Activated naive CD4-positive, alpha-beta T cell treated with anti-CD3 and anti-CD28 coated beads for 36 hours (primary cell): ENCODE measurements at regions of chr13 and their contacts with region 1.

Region 1: DNA sequence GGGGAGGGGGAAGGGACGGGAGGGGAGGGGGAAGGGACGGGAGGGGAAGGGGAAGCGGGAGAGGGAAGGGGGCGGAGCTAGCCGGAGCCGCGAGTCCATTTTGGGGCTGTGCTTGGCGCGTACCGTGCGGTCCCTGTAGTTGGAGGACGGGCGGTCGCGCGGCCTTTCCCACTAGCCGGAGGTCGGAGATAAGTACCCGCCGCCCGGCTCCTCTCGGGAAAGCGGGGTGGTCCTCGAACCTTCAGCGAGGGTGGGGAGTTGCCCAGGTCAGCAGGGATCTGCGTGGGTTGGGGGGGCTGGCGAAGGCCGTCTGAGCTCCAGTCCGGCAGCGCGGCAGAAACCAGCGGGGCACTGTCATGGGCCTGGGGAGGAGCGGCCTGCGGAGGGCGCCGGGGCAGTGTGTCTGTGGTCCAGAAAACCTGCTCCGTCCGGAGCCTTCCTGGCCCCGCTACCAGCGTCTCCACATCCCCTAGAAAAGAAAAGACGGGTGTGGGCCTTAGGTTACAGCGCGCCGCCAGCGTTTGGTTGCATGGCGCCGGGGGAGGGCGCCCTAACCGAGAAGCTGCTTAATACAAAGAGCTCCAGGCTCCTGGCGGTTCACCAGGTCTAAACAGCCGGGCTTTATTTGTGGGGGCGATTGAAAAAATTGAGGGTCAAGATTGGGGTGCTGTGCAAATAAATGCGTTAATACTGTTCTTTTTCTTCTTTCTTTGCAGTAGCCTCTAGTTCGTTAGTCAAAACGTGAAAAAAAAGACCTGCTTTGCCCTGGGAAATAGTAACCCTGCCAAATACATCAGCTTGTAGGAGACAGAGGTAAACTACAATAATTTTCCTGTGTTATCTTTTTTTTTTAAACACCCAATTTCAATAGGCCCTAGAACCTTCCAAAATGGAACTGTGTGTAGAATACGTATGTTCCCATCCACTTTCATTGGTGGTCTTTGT is at the start of gene TRIM13:
- DNase-seq: peak; percentile 90
- H3K4me3 Mint-ChIP-seq: peak within 1 kb of the TSS; percentile 79
- H3K27ac Mint-ChIP-seq: peak within 1 kb of the TSS; percentile 85
- H3K4me1 Mint-ChIP-seq: peaks cover 33% of the 10 kb centered on the region
- H3K27me3 Mint-ChIP-seq: no peaks in the 10 kb centered on the region
- total RNA-seq, gene TRIM13: 15.5 to 15.8 TPM

Region 2: DNA sequence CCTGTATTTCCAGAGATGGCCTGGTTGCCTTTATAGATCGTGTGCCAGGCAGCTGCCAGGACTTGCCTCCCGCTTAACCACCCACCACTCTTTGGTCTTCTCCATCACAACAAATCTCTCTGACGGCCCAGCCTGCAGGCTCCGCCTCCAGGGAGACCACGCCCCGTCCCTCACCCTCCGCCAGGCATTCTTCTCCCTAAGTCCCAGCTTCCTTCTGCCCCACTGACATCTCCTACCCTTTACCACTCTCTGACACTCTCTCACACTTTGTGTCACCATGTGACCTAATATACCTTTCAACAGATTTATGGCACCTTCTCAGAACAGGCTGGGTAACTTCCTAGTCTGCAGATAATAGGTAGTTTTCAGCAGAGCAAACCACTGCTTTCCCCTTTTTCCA is 648.5 kb before region 1 on chr13:
- CTCF ChIA-PET with region 1: no interaction called
- intact Hi-C with region 1: no loop called
- DNase-seq: no peak
- H3K4me3 Mint-ChIP-seq: no peak overlapping the region
- H3K27ac Mint-ChIP-seq: no peak overlapping the region
- H3K4me1 Mint-ChIP-seq: peaks cover 3% of the 10 kb centered on the region
- H3K27me3 Mint-ChIP-seq: no peaks in the 10 kb centered on the region

Region 3: GRCh38 chr13:49936085-49936940 is 60.9 kb before region 1 on chr13 and contains the start of gene SPRYD7:
- CTCF ChIA-PET with region 1: interaction called, 3 read pairs
- intact Hi-C with region 1: loop called (anchors 1 kb)
- DNase-seq: peak; percentile 96
- H3K4me3 Mint-ChIP-seq: peak within 1 kb of the TSS; percentile 90
- H3K27ac Mint-ChIP-seq: peak within 1 kb of the TSS; percentile 70
- H3K4me1 Mint-ChIP-seq: peaks cover 7% of the 10 kb centered on the region
- H3K27me3 Mint-ChIP-seq: peaks cover 2% of the 10 kb centered on the region
- total RNA-seq, gene SPRYD7: 2.5 to 2.6 TPM

Region 4: DNA sequence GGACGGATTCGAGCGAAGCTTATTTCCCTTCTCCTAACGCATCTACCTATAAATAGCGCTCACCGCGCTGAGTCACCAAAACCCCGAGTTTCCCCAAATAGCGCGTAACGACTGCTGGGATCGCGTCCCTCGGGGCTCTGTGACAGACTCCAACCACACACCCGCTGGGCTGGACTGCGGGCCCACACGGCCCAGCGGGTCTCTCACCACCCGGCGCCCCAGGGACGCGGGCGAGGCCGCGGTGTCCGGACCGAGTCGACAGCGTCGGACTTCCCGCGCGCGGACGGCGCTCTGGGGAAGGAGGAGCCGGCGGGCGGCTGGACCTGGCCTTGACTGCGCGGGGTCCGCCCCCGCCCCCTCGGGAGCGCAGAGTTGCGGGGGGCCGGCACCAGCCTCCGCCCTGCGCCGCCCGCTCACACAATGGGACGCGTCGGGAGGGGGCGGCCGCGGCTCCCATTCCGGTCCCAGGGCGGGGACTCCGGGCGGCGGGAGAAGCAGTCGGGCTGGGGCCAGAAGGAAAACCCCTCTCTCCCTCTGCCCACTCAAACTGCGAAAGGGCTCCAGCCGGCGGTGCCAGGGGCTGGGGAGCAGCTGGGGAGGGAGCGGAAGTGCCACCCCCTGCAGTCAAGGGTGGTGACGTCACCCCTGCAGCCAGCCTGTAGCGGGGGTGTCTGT is 126.8 kb after region 1 on chr13:
- CTCF ChIA-PET with region 1: no interaction called
- intact Hi-C with region 1: loop called (anchors 1 kb)
- DNase-seq: peak; percentile 89
- H3K4me3 Mint-ChIP-seq: peak overlapping the region; percentile 77
- H3K27ac Mint-ChIP-seq: peak overlapping the region; percentile 92
- H3K4me1 Mint-ChIP-seq: peaks cover 48% of the 10 kb centered on the region
- H3K27me3 Mint-ChIP-seq: peaks cover 15% of the 10 kb centered on the region

Region 5: DNA sequence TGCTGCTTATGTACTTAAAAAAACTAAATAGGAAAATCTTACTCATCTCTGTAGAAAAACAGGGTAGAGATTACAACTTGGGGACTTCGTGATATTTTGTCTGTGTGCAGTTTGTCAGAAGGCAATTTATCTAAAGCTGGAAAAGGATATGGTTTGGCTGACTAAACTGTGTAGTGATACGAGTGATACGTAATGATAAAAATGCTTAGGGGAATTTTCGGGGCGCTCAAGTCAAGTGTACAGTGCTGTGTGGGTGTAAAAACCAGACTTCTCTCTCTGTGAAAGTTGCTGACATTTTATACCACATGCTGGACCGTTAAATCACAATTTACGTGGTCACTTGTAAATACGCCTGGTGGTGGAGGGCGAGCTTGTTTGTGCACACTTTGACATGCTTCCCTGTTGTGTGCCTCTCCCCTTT is 239.7 kb after region 1 on chr13:
- CTCF ChIA-PET with region 1: no interaction called
- intact Hi-C with region 1: loop called (anchors 2 kb)
- DNase-seq: peak; percentile 62
- H3K4me3 Mint-ChIP-seq: no peak overlapping the region
- H3K27ac Mint-ChIP-seq: peak overlapping the region; percentile 61
- H3K4me1 Mint-ChIP-seq: peaks cover 48% of the 10 kb centered on the region
- H3K27me3 Mint-ChIP-seq: peaks cover 12% of the 10 kb centered on the region

Region 6: GRCh38 chr13:50387051-50387581 is 389.9 kb after region 1 on chr13:
- CTCF ChIA-PET with region 1: no interaction called
- intact Hi-C with region 1: loop called (anchors 1 kb)
- DNase-seq: peak; percentile 56
- H3K4me3 Mint-ChIP-seq: no peak overlapping the region
- H3K27ac Mint-ChIP-seq: no peak overlapping the region
- H3K4me1 Mint-ChIP-seq: peaks cover 2% of the 10 kb centered on the region
- H3K27me3 Mint-ChIP-seq: peaks cover 5% of the 10 kb centered on the region

Region 7: GRCh38 chr13:50801087-50801931 is 804.1 kb after region 1 on chr13:
- CTCF ChIA-PET with region 1: interaction called, 6 read pairs
- intact Hi-C with region 1: loop called (anchors 1 kb)
- DNase-seq: peak; percentile 80
- H3K4me3 Mint-ChIP-seq: no peak overlapping the region
- H3K27ac Mint-ChIP-seq: no peak overlapping the region
- H3K4me1 Mint-ChIP-seq: peaks cover 5% of the 10 kb centered on the region
- H3K27me3 Mint-ChIP-seq: no peaks in the 10 kb centered on the region